CD4-positive, alpha-beta T cell (primary cell): ENCODE measurements at regions of chr16 and their contacts with region 1.

Region 1: GRCh38 chr16:75764154-75764768 is 38.0 kb upstream of the CPHXL start:
- DNase-seq: peak; percentile 31 to 84 (median 44)
- ATAC-seq: peak; percentile 97
- H3K4me3 ChIP-seq: no peak overlapping the region
- H3K4me3 Mint-ChIP-seq: no peak overlapping the region
- H3K27ac ChIP-seq: no peak overlapping the region
- H3K27ac Mint-ChIP-seq: no peak overlapping the region
- H3K4me1 ChIP-seq: peaks cover 6% of the 10 kb centered on the region
- H3K4me1 Mint-ChIP-seq: no peaks in the 10 kb centered on the region
- H3K27me3 ChIP-seq: peaks cover 0 to 3% of the 10 kb centered on the region in 2 experiments
- H3K27me3 Mint-ChIP-seq: no peaks in the 10 kb centered on the region
- CTCF ChIP-seq: peak; percentile 82

Region 2: GRCh38 chr16:75385507-75386152 is 378.6 kb before region 1 on chr16:
- CTCF ChIA-PET with region 1: no interaction called
- POLR2A ChIA-PET with region 1: no interaction called
- intact Hi-C with region 1: loop called in 1 of 2 experiments (anchors 10 kb)
- DNase-seq: peak in 3 of 14 experiments; percentile 68 to 82 (median 81)
- ATAC-seq: peak; percentile 60
- H3K4me3 ChIP-seq: no peak overlapping the region
- H3K4me3 Mint-ChIP-seq: no peak overlapping the region
- H3K27ac ChIP-seq: no peak overlapping the region
- H3K27ac Mint-ChIP-seq: no peak overlapping the region
- H3K4me1 ChIP-seq: peaks cover 14% of the 10 kb centered on the region
- H3K4me1 Mint-ChIP-seq: peaks cover 33% of the 10 kb centered on the region
- H3K27me3 ChIP-seq: no peaks in the 10 kb centered on the region
- H3K27me3 Mint-ChIP-seq: no peaks in the 10 kb centered on the region
- CTCF ChIP-seq: peak; percentile 86

Region 3: GRCh38 chr16:75471723-75472633 is 292.3 kb before region 1 on chr16:
- CTCF ChIA-PET with region 1: no interaction called
- POLR2A ChIA-PET with region 1: no interaction called
- intact Hi-C with region 1: loop called (anchors 1 kb)
- DNase-seq: peak in 10 of 14 experiments; percentile 14 to 72 (median 28)
- ATAC-seq: peak; percentile 82
- H3K4me3 ChIP-seq: no peak overlapping the region
- H3K4me3 Mint-ChIP-seq: no peak overlapping the region
- H3K27ac ChIP-seq: no peak overlapping the region
- H3K27ac Mint-ChIP-seq: no peak overlapping the region
- H3K4me1 ChIP-seq: no peaks in the 10 kb centered on the region
- H3K4me1 Mint-ChIP-seq: no peaks in the 10 kb centered on the region
- H3K27me3 ChIP-seq: no peaks in the 10 kb centered on the region
- H3K27me3 Mint-ChIP-seq: peaks cover 2% of the 10 kb centered on the region
- CTCF ChIP-seq: peak; percentile 82